Right ventricle myocardium inferior (tissue), 1 donor: ENCODE measurements at regions of chr13 and their contacts with region 1.

Region 1: DNA sequence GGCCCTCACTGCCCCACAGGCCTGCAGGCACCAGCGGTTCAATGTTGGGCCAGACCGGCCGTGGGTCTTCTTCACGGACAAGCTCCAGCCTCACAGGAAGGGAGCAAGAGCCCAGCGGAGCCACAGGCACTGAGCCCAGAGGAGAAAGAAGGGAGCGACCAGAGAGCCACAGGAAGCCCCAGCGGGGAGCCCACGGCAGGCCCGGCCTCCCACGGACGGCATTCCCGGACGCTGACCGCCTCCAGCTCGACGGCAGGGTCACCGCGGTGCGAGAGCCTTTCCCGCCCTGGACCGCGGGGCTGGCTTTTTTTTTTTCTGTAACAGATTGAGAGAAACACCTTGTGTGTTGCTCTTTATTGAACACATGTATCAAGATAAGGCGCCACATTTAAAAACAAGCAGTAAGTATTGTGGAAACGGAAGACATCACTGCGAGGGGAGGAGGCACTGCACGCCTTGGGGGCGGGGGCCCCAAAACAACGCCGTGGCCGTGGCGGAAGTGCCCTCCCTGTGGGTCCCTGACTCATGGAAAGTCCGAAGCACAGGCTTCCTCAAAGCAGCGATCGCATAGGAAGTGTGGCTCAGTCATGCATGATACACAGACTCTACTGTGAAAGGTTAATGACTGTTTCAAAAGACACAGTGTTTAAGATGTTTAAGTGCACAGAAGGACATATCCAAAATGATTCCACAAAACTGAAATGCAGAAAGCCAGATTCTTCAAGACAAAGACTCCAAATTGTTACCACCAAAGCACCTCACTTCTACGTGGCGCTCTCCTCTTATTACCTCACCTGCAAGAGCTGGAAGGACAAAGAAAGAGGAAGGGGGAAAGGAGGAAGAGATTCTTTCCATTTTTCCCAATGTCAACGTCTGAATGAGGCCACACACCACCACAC is 3.5 kb downstream of the RASA3 start:
- DNase-seq: peak; percentile 93
- ATAC-seq: peak; percentile 51

Region 2: DNA sequence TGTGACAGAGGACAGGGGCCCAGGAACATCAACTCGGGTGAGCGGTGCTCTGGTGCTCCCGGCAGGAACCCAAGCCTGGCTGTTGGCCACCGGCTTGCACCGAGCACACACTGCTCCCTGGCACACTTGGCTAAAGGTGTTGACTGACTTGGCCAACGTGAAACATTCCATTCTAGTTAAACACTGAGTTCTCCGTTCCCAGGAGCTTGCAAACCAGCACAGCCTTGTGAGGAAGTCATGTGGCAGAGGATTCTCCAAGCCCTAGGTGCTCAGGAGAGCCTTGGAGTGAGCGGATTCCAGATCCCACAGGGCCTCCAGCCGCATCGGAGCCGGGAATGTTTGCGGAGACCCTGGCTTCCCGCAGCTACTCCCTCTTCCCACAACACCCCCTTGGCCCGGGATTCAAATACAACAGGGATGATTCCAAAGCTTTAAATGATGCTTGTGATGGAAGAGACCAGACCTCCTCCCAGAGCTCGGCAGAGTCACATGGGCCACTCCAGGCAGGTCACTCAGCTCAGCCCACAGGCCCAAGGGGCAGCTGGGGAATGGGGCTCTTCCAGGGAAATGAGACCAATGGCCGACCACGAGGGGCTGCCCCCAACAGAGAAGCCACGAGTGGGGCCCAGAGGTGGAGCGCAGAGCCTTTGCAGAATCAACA is 157.9 kb before region 1 on chr13:
- intact Hi-C with region 1: no loop called
- DNase-seq: peak; percentile 68
- ATAC-seq: peak; percentile 85

Region 3: GRCh38 chr13:114043421-114044053 is 85.3 kb before region 1 on chr13:
- intact Hi-C with region 1: no loop called
- DNase-seq: peak; percentile 88
- ATAC-seq: peak; percentile 90

Region 4: DNA sequence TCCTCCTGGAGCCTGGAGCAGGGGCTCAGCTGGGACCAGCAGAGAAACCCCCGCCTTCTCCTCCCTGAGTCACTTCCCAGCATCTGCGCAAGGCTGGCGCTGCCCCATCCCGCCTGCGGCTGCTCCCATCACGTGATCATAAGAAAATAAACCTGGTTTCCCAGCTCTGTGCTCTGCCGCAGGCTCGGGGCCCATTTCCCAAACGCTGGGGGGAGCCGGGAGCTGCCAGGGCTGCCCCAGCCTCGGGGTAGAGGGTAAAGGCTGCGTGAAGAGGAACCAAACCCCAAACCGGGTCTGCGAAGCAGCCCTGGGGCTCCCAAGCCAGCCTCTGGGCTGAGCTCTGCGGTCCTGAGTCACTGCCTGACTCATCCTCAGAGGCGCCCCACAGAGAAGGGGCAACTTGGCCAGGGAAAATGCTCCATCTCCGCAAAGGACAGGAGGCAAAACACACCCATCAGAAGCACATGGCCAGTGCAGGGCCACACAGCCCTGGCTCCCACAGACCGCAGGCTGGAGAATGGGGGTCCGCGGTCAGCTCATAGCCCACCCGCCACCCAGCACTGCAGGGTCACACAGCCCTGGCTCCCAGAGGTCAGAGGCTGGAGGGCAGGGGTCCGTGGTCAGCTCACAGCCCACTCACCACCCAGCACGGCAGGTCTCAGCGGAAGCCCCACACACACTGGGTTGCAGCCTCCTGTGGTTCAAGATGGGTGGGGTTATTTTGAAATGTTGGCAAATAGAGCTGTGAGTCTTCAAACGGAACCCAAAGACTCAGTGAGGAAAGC is 63.5 kb before region 1 on chr13:
- intact Hi-C with region 1: loop called (anchors 2 kb)
- DNase-seq: peak; percentile 89
- ATAC-seq: peak; percentile 87

Region 5: DNA sequence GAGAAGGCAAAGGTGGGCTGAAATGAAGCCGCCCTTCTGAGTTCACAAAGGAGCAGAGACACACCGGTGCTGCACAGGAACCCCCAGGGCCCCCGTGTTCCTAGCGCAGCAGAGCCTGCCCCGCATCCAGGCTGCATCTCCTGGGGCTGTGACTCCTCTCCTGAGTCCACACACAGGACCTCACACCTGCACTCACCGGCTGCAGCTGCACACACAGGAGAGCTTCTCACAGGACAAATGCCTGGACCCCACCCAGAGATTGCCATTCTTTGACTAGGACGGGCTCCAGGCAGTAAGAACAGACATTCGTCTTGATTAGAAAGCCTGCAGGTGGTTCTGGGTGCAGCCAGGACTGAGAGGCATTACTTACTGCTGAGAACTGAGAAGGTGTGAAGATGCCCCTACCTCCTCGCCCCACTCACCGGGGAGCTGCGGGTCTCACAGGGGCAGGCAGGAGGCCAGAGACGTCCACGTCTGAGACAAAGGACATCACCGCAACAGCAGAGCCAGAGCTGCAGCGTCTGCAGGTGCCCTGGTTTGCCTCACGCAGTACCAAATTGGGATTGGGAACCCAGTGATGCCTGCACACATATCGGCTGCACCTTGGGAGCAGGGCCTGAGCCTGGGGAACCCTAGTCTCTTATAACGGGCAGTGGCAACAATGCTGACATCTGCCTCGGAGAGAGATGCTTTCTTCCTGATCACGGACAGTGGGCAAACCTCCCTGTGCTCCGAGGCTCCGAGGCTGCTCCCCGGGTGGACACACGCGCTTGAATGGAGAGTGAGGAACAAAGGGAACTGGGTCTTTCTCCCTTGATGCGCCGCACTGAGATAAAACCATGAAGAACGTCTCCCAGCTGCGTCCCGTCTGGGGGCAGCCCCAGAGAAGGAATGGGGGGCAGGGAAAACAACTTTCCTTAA is 46.9 kb before region 1 on chr13:
- intact Hi-C with region 1: no loop called
- DNase-seq: peak; percentile 9
- ATAC-seq: no peak